ENCODE measurements at regions of chr5 and their contacts with region 1.

Region 1: DNA sequence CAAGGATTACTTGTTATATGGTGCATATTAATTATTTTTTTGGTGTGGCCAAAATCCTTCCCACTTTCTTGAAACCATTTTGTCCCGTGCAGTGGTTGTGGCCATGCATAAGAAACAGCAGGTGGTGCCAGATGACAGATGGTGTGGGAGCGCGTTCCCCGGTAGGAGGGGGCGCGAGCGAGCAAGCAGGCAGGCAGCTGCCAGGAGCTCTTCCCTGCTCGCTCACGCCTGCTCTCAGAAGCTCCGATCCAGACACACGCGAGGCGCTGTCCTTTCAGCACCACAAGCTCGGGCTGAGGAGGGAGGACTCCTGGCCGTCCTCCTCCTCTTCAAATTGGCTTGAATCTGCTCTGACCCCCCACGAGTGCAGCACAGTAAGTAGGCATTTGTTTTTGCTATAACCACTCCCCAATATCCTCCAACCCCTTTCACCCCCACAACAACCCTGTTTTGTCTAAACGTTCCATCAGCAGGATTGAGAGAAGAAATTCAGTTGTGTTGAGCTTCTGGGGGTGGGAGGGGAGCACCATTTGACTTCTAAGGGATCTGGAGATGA is at the start of gene NSG2:
- DNase-seq: peak; percentile 25 to 46
- ATAC-seq: peak; percentile 53 to 70
- H3K4me3 ChIP-seq: no peak within 1 kb of the TSS
- H3K27ac ChIP-seq: no peak within 1 kb of the TSS
- H3K4me1 ChIP-seq: no peaks in the 10 kb centered on the region
- H3K27me3 ChIP-seq: peaks cover 0 to 2% (median 0%) of the 10 kb centered on the region in 3 donors
- CTCF ChIP-seq: peak in 3 of 5 experiments; percentile 34 to 46 (median 35)
- POLR2A ChIP-seq: no peak
- total RNA-seq, gene NSG2: not detected

Region 2: GRCh38 chr5:174311531-174312269 is 266.2 kb after region 1 on chr5:
- in situ Hi-C with region 1: loop called in 3 of 4 experiments (anchors 5 to 25 kb)
- intact Hi-C with region 1: loop called (anchors 1 kb)
- DNase-seq: peak in 1 of 2 donors; percentile 41
- ATAC-seq: peak; percentile 69 to 73
- H3K4me3 ChIP-seq: peak overlapping the region; percentile 33 to 59 (median 37)
- H3K27ac ChIP-seq: peak overlapping the region in 2 of 4 donors; percentile 8 to 74
- H3K4me1 ChIP-seq: peaks cover 15 to 19% of the 10 kb centered on the region in 2 donors
- H3K27me3 ChIP-seq: no peaks in the 10 kb centered on the region
- CTCF ChIP-seq: peak; percentile 63 to 89 (median 82)
- POLR2A ChIP-seq: no peak

Region 3: DNA sequence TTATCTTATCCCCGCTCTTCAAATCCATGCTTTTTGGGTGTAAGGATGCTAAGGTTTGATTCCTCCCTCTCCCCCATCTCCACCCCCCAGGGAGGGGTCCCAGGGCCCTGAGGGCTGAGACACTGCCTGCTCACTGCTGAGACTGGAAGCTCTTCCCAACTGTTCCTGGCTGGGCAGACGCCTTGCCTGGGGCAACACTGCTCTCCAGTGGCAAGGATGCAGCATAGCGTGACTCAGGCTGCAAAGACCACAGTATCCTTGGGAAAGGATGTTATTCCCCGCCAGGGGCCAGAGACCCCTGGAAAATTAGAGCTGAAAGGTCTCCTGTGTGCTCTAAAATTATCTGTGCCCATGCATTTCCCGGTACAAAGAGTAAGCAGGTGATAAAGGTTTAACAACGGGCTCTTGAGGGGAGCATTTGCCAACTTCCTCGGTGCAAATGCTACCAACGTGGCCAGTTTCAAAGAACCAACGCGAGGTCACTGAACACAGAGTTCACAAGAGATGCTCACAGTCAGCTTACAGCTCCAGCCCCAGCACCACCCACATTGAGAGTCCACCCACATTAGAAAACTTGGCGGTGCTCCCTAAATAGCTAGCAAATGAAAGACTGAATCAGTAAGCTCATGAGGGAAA is 271.8 kb after region 1 on chr5:
- in situ Hi-C with region 1: loop called in 3 of 4 experiments (anchors 5 to 25 kb)
- intact Hi-C with region 1: loop called (anchors 1 kb)
- DNase-seq: no peak
- ATAC-seq: no peak
- H3K4me3 ChIP-seq: no peak overlapping the region
- H3K27ac ChIP-seq: no peak overlapping the region
- H3K4me1 ChIP-seq: peaks cover 0 to 3% of the 10 kb centered on the region in 2 donors
- H3K27me3 ChIP-seq: peaks cover 0 to 8% (median 0%) of the 10 kb centered on the region in 3 donors
- CTCF ChIP-seq: peak; percentile 31 to 64 (median 50)
- POLR2A ChIP-seq: no peak